Dorsolateral prefrontal cortex (tissue), 120 donors: ENCODE measurements at regions of chr4 and their contacts with region 1.

Region 1: DNA sequence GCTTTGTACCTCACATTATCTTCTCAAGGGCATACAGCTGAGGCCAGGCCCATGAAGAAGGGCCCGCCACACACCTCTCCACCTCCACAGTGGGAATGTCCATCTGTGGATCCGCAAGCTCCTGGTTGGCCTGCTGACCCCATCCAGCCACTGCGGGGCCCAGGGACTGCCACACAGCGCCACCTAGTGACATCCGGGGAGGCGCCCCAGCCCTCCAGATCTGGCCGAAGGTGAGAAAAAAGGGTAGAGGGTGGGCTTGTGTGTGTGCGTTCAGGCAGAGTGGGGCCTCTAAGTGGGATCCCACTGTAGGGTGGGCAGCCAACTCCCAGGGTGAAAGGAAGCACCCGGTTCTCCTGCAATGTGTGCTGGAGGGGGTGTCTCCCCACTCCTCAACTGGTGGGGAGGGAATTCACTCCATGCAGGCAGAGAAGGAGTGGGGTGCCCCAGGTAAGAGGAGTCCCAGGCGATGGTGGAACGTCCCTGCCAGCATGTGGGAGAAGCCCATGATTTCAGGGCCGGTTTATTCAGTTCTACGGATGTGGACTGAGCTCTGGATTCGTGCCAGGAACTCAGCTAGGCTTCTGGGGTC is 117.3 kb downstream of the ENPP6 start:
- DNase-seq: peak in 4 of 10 donors; percentile 49 to 83 (median 67)
- H3K4me3 ChIP-seq: no peak overlapping the region
- H3K27ac ChIP-seq: peak overlapping the region in 58 of 59 donors; percentile 3 to 92 (median 68)
- H3K27me3 ChIP-seq: no peaks in the 10 kb centered on the region
- CTCF ChIP-seq: peak in 43 of 56 donors; percentile 37 to 95 (median 67)

Region 2: DNA sequence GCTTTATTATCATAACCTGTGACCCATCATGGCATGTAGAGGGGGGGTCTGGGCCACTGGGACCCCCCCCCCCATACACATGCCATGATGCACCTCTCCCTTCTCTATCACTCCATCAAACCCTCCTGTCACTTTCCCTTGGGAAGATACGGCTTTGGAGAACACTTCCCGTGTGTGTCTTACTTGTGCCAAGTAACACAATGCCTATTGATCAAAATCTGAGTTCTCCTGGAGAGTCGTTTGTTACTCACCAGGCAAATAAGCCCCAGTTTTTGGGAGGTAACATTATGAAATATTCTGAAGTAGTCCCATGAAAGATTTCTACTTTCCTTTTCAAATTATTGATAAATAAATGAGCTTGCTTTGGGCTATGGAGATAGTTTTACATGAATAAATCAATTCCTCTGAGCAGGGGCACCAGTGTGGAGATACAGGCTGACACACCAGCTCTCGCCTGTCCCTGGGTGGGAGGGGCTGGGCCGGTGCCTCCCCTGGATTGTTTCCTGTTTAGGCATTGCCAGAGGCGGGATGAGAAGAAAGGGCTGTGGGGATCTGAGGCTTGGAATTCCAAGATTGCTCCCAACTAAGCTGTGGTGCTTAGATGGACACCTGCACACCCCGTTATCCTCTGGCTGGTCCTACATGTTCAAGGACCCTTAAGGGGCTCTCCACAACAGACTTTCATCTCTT is 1064.5 kb before region 1 on chr4:
- intact Hi-C with region 1: no loop called
- DNase-seq: no peak
- H3K4me3 ChIP-seq: no peak overlapping the region
- H3K27ac ChIP-seq: no peak overlapping the region
- H3K27me3 ChIP-seq: peaks cover 0 to 8% (median 0%) of the 10 kb centered on the region in 45 donors
- CTCF ChIP-seq: no peak

Region 3: GRCh38 chr4:183621875-183622274 is 478.5 kb before region 1 on chr4:
- intact Hi-C with region 1: no loop called
- DNase-seq: no peak
- H3K4me3 ChIP-seq: no peak overlapping the region
- H3K27ac ChIP-seq: no peak overlapping the region
- H3K27me3 ChIP-seq: no peaks in the 10 kb centered on the region
- CTCF ChIP-seq: no peak

Region 4: DNA sequence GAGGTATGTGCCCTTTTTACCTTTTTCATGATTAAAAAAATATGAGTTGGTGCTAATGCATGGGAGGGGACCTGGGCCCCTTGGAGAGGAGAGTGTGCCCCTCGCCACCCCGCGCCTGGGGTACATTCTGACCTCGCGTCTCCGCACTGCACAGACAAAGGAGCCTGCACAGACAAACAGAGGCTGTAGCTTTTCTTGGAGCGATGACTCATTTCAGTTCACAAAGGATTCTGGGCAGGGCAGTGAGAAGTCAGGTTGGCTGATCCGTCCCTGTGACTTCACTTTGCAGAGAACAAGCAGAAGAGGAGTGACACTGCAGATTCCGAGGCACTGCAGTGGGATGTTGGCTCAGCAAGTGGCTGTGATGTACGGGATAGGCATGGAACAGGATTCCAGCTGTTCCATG is 112.4 kb before region 1 on chr4:
- intact Hi-C with region 1: loop called in 1 of 2 experiments (anchors 10 kb)
- DNase-seq: peak; percentile 33 to 91 (median 74)
- H3K4me3 ChIP-seq: peak overlapping the region; percentile 29 to 75 (median 57)
- H3K27ac ChIP-seq: peak overlapping the region; percentile 18 to 95 (median 88)
- H3K27me3 ChIP-seq: no peaks in the 10 kb centered on the region
- CTCF ChIP-seq: peak in 2 of 56 donors; percentile 11 to 17

Region 5: DNA sequence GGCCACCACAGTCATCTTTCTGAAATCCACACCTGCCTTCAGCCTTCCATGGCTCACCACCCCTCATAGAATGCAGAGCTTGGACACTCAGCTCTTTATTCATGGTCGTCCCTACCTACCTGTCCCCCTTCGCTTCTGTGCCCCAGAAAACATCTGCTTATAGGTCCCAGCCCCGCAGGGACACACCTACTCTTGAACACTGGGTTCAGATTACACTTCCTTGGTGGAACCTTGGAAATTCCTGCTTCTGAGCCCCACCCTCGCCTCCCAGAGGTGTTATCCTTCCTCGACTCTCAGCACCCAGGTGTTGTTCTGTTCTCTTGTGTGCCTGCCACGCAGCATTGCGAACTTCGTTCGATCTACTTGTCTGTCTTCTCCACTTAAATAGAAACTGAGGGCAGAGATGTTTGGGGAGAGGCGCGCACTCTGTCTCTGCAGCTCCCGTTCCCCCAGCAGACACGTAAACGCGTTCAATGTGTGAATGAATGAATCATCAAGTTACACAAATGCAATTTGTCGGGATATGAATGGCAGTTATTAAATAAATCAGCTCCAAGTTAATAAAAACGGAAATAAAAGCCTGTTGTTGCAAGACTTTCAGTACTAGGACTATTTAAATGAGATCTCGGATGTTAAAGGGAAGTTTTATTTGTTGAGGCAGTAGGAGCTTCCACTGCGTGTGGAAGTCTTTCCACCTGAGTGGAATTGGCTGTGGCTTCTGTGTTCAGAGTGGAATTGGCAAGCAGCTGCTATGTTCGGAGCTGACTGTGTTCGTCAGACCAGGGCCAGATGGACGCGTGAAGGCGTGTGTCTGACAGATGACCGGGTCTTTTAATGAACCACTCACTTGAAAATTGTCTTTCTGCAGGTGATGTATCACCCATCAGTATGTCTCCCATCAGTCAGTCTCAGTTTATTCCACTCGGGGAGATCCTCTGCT is 99.7 kb before region 1 on chr4:
- intact Hi-C with region 1: no loop called
- DNase-seq: peak in 1 of 10 donors; percentile 58
- H3K4me3 ChIP-seq: peak overlapping the region in 1 of 59 donors; percentile 11
- H3K27ac ChIP-seq: no peak overlapping the region
- H3K27me3 ChIP-seq: no peaks in the 10 kb centered on the region
- CTCF ChIP-seq: no peak

Region 6: GRCh38 chr4:184039963-184040383 is 60.4 kb before region 1 on chr4:
- intact Hi-C with region 1: no loop called
- DNase-seq: peak in 3 of 10 donors; percentile 18 to 31 (median 21)
- H3K4me3 ChIP-seq: peak overlapping the region in 45 of 59 donors; percentile 8 to 60 (median 35)
- H3K27ac ChIP-seq: peak overlapping the region in 1 of 59 donors; percentile 28
- H3K27me3 ChIP-seq: no peaks in the 10 kb centered on the region
- CTCF ChIP-seq: no peak

Region 7: GRCh38 chr4:184250795-184251669 is 150.6 kb after region 1 on chr4:
- intact Hi-C with region 1: loop called (anchors 10 kb)
- DNase-seq: no peak
- H3K4me3 ChIP-seq: no peak overlapping the region
- H3K27ac ChIP-seq: no peak overlapping the region
- H3K27me3 ChIP-seq: no peaks in the 10 kb centered on the region
- CTCF ChIP-seq: peak; percentile 43 to 77 (median 66)